ENCODE measurements at regions of chrX and their contacts with region 1.

Region 1: DNA sequence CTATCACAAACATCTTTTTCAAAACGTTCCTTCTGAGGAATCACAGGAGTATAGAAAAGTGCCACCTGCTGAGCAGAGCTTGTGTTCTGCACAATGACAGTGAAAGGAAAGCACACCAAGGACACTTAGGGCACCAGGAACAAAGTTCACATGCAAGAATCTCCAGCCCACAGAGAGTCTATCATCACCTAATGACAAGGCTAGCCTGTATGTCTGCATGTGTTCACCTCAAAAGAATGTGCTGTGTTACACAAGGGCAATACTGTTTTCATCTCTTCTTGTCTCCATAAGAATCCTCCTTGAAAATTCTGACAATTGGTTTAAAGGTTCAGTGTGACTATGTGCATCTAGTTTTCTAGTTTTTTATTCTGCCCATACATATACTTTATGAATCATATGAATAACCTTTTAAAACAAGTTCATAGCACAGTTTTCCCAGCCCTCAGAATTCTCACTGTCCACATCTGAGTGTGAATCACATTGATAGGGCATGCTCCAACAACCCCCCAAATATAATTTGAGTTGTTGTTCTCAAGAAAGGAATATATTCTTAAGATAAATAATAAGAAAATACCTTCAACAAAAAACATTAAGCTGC is 118.0 kb downstream of the PWWP3B start:
- DNase-seq: no peak
- ATAC-seq: no peak
- H3K4me3 ChIP-seq: no peak overlapping the region
- H3K27ac ChIP-seq: no peak overlapping the region
- H3K4me1 ChIP-seq: no peaks in the 10 kb centered on the region
- H3K27me3 ChIP-seq: no peaks in the 10 kb centered on the region

Region 2: GRCh38 chrX:106144755-106145639 is 141.2 kb before region 1 on chrX:
- intact Hi-C with region 1: no loop called
- DNase-seq: no peak
- ATAC-seq: no peak
- H3K4me3 ChIP-seq: no peak overlapping the region
- H3K27ac ChIP-seq: no peak overlapping the region
- H3K4me1 ChIP-seq: no peaks in the 10 kb centered on the region
- H3K27me3 ChIP-seq: no peaks in the 10 kb centered on the region

Region 3: GRCh38 chrX:106510713-106511403 is 224.7 kb after region 1 on chrX:
- intact Hi-C with region 1: loop called in 1 of 2 experiments (anchors 10 kb)
- DNase-seq: no peak
- ATAC-seq: no peak
- H3K4me3 ChIP-seq: no peak overlapping the region
- H3K27ac ChIP-seq: no peak overlapping the region
- H3K4me1 ChIP-seq: no peaks in the 10 kb centered on the region
- H3K27me3 ChIP-seq: no peaks in the 10 kb centered on the region